ENCODE measurements at regions of chr19 and their contacts with region 1.

Region 1: GRCh38 chr19:45717166-45717982 is 13.3 kb downstream of the FBXO46 start:
- DNase-seq: peak; percentile 97
- H3K4me3 ChIP-seq: peak overlapping the region; percentile 69
- H3K27ac ChIP-seq: peak overlapping the region; percentile 97
- H3K27me3 ChIP-seq: no peaks in the 10 kb centered on the region
- CTCF ChIP-seq: 0 out of 2 replicates have a peak, but pooled peaks have one; percentile 16

Region 2: GRCh38 chr19:45692187-45693105 is 24.9 kb before region 1 on chr19 and contains the start of gene QPCTL:
- CTCF ChIA-PET with region 1: interaction called, 53 read pairs
- POLR2A ChIA-PET with region 1: interaction called, 11 read pairs
- DNase-seq: peak; percentile 99
- H3K4me3 ChIP-seq: peak within 1 kb of the TSS; percentile 96
- H3K27ac ChIP-seq: peak within 1 kb of the TSS; percentile 89
- H3K27me3 ChIP-seq: no peaks in the 10 kb centered on the region
- CTCF ChIP-seq: no peak
- polyA plus RNA-seq, gene QPCTL: 6.7 and 9.5 TPM in 2 replicates

Region 3: GRCh38 chr19:45730389-45731288 is 13.3 kb after region 1 on chr19 and contains the start of gene FBXO46:
- CTCF ChIA-PET with region 1: interaction called, 4 read pairs
- POLR2A ChIA-PET with region 1: interaction called, 20 read pairs
- DNase-seq: peak; percentile 95
- H3K4me3 ChIP-seq: peak within 1 kb of the TSS; percentile 72
- H3K27ac ChIP-seq: peak within 1 kb of the TSS; percentile 21
- H3K27me3 ChIP-seq: no peaks in the 10 kb centered on the region
- CTCF ChIP-seq: peak; percentile 25; the same call in 1 of the 2 replicates
- polyA plus RNA-seq, gene FBXO46: 1.4 and 2.2 TPM in 2 replicates

Region 4: GRCh38 chr19:45764945-45765701 is 47.7 kb after region 1 on chr19:
- CTCF ChIA-PET with region 1: interaction called, 6 read pairs
- POLR2A ChIA-PET with region 1: interaction called, 46 read pairs
- DNase-seq: no peak
- H3K4me3 ChIP-seq: no peak overlapping the region
- H3K27ac ChIP-seq: no peak overlapping the region
- H3K27me3 ChIP-seq: no peaks in the 10 kb centered on the region
- CTCF ChIP-seq: no peak

Region 5: DNA sequence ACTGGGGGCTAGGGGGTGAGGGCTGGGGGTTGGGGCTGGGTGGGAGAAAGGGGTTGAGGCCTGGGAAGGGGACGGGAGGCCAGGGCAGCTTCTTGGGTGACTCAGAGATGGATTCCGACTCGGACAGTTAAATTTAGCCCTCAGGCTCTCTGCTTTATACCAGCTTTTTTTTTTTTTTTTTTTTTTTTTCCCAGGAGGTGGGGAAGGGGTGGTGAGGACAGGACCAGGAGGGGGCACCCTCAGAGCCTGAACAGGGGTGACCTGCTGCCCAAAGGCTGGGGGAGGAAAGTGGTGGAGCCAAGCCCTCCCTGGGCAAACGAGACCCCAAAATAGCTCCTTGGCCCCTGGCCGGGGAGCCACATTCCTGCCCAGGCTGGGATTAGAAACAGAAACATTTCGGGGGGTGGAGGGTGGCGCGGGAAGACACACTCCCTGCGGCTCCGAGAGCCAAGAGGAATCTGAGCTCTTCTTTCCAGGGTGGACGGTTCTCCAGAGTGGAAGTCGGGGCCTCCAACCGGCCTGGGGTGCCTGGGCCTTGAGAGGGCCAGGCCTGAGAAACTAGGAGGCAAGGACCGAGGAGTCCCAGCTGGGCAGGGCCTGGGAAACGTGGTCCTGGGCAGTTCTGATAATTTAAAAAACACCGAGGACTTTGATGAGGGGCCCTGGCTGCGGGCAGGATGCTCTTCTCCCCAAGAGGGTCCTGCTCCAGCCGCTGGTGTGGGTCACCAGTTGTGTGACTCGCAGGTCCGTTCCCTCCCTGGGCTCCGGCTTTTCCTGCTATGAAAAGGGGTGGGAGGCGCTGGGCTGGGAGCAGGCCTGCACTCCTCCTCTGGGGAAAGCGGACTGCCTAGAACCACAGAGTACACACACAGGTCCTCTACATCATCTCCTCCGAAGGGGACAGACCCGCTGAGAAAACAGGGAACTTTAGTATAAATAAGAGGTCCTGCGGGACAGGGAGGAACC is 65.7 kb after region 1 on chr19:
- CTCF ChIA-PET with region 1: no interaction called
- POLR2A ChIA-PET with region 1: interaction called, 12 read pairs
- DNase-seq: no peak
- H3K4me3 ChIP-seq: peak overlapping the region; percentile 62
- H3K27ac ChIP-seq: peak overlapping the region; percentile 94
- H3K27me3 ChIP-seq: no peaks in the 10 kb centered on the region
- CTCF ChIP-seq: 0 out of 2 replicates have a peak, but pooled peaks have one; percentile 11

Measured in AG04450 (cell line).